Activated CD4-positive, alpha-beta T cell treated with anti-CD3 and anti-CD28 coated beads for 36 hours (primary cell): ENCODE measurements at regions of chr19 and their contacts with region 1.

Region 1: GRCh38 chr19:17390665-17391370 is 3.2 kb downstream of the CCDC194 start:
- DNase-seq: peak; percentile 97
- ATAC-seq: peak; percentile 98
- H3K4me3 Mint-ChIP-seq: peak overlapping the region; percentile 83
- H3K27ac Mint-ChIP-seq: peak overlapping the region; percentile 33
- H3K4me1 Mint-ChIP-seq: peaks cover 24% of the 10 kb centered on the region
- H3K27me3 Mint-ChIP-seq: peaks cover 4% of the 10 kb centered on the region

Region 2: GRCh38 chr19:17292286-17293097 is 98.3 kb before region 1 on chr19:
- CTCF ChIA-PET with region 1: interaction called, 9 read pairs
- POLR2A ChIA-PET with region 1: no interaction called
- intact Hi-C with region 1: loop called (anchors 1 kb)
- DNase-seq: peak; percentile 90
- ATAC-seq: peak; percentile 98
- H3K4me3 Mint-ChIP-seq: peak overlapping the region; percentile 88
- H3K27ac Mint-ChIP-seq: peak overlapping the region; percentile 84
- H3K4me1 Mint-ChIP-seq: peaks cover 5% of the 10 kb centered on the region
- H3K27me3 Mint-ChIP-seq: no peaks in the 10 kb centered on the region

Region 3: GRCh38 chr19:17336872-17337722 is 53.7 kb before region 1 on chr19 and contains the start of gene GTPBP3:
- CTCF ChIA-PET with region 1: interaction called, 4 read pairs
- POLR2A ChIA-PET with region 1: interaction called, 4 read pairs
- intact Hi-C with region 1: loop called in 1 of 2 experiments (anchors 2 kb)
- DNase-seq: peak; percentile 98
- ATAC-seq: peak; percentile 89
- H3K4me3 Mint-ChIP-seq: peak within 1 kb of the TSS; percentile 98
- H3K27ac Mint-ChIP-seq: peak within 1 kb of the TSS; percentile 98
- H3K4me1 Mint-ChIP-seq: peaks cover 25% of the 10 kb centered on the region
- H3K27me3 Mint-ChIP-seq: no peaks in the 10 kb centered on the region
- total RNA-seq, gene GTPBP3: 37.3 to 39.8 TPM

Region 4: GRCh38 chr19:17346109-17346671 is 44.6 kb before region 1 on chr19:
- CTCF ChIA-PET with region 1: interaction called, 8 read pairs
- POLR2A ChIA-PET with region 1: no interaction called
- intact Hi-C with region 1: loop called (anchors 1 kb)
- DNase-seq: peak; percentile 90
- ATAC-seq: peak; percentile 99
- H3K4me3 Mint-ChIP-seq: no peak overlapping the region
- H3K27ac Mint-ChIP-seq: no peak overlapping the region
- H3K4me1 Mint-ChIP-seq: peaks cover 4% of the 10 kb centered on the region
- H3K27me3 Mint-ChIP-seq: peaks cover 12% of the 10 kb centered on the region

Region 5: DNA sequence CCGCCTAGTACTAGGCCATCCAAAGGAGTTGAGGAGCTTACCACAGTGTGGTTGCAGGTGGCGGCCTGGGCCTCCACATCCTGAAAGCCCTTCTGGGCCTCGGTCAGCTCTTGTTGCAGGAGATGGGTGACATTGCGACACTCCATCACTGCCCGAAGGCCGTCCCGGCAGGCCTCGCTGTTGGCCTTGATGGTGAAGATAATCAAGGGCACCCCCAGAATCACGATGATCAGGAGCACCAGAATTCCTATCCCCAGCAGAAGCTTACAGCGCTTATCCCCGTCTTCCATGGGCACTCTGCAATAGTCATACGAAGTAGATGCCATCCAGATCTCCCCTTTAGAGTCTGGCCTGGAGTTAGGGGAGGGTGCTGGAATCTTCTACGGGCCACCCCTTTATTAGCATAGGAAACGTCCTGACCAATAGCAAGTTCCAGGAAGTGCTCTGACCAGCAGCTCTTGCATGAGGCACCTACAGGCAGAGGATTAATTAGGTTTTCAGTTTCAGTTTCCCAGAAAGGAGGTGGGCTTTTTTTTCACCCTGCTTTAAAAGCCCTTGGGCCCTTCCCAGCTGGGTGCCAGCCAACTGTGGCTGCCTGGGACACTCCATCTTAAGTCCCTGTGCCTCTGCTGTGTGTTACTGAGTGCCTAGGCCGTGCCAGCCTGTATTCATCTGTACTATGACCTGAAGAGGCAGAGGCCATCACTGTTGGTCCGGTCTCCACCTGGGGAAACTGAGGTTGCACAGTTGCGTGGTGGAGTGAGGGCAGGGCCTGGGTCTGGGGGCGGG is 14.6 kb after region 1 on chr19 and contains the start of gene BST2:
- CTCF ChIA-PET with region 1: interaction called, 7 read pairs
- POLR2A ChIA-PET with region 1: no interaction called
- intact Hi-C with region 1: loop called (anchors 1 to 2 kb)
- DNase-seq: peak; percentile 60
- ATAC-seq: peak; percentile 80
- H3K4me3 Mint-ChIP-seq: peak within 1 kb of the TSS; percentile 76
- H3K27ac Mint-ChIP-seq: peak within 1 kb of the TSS; percentile 90
- H3K4me1 Mint-ChIP-seq: peaks cover 28% of the 10 kb centered on the region
- H3K27me3 Mint-ChIP-seq: no peaks in the 10 kb centered on the region
- total RNA-seq, gene BST2: 62.0 to 70.7 TPM

Region 6: GRCh38 chr19:17419621-17420466 is 29.0 kb after region 1 on chr19 and contains the start of gene MVB12A:
- CTCF ChIA-PET with region 1: interaction called, 6 read pairs
- POLR2A ChIA-PET with region 1: no interaction called
- intact Hi-C with region 1: loop called in 1 of 2 experiments (anchors 1 kb)
- DNase-seq: peak; percentile 97
- ATAC-seq: peak; percentile 95
- H3K4me3 Mint-ChIP-seq: peak within 1 kb of the TSS; percentile 91
- H3K27ac Mint-ChIP-seq: peak within 1 kb of the TSS; percentile 87
- H3K4me1 Mint-ChIP-seq: peaks cover 11% of the 10 kb centered on the region
- H3K27me3 Mint-ChIP-seq: no peaks in the 10 kb centered on the region
- total RNA-seq, gene MVB12A: 27.6 to 32.6 TPM